ENCODE measurements at regions of chr3 and their contacts with region 1.

Region 1: GRCh38 chr3:62665598-62666437 is 209.4 kb downstream of the CADPS start:
- DNase-seq: peak; percentile 24
- CTCF ChIP-seq: peak; percentile 47

Region 2: GRCh38 chr3:62655691-62656063 is 10.1 kb before region 1 on chr3:
- CTCF ChIA-PET with region 1: interaction called, 12 read pairs
- POLR2A ChIA-PET with region 1: no interaction called
- DNase-seq: no peak
- CTCF ChIP-seq: no peak

Region 3: GRCh38 chr3:63135367-63135766 is 469.5 kb after region 1 on chr3:
- CTCF ChIA-PET with region 1: no interaction called
- POLR2A ChIA-PET with region 1: no interaction called
- DNase-seq: no peak
- CTCF ChIP-seq: no peak